Dendritic cell treated with granulocyte-macrophage colony-stimulating factor and Interleukin-4, amounts not matched to agents 40 ng/mL and 50 ng/mL, for 4 days (primary cell): ENCODE measurements at regions of chr20 and their contacts with region 1.

Region 1: GRCh38 chr20:57391074-57391554 is at the start of gene RBM38:
- H3K4me3 Mint-ChIP-seq: peak within 1 kb of the TSS; percentile 79
- H3K27ac Mint-ChIP-seq: peak within 1 kb of the TSS; percentile 97
- H3K4me1 Mint-ChIP-seq: peaks cover 59% of the 10 kb centered on the region
- H3K27me3 Mint-ChIP-seq: no peaks in the 10 kb centered on the region

Region 2: DNA sequence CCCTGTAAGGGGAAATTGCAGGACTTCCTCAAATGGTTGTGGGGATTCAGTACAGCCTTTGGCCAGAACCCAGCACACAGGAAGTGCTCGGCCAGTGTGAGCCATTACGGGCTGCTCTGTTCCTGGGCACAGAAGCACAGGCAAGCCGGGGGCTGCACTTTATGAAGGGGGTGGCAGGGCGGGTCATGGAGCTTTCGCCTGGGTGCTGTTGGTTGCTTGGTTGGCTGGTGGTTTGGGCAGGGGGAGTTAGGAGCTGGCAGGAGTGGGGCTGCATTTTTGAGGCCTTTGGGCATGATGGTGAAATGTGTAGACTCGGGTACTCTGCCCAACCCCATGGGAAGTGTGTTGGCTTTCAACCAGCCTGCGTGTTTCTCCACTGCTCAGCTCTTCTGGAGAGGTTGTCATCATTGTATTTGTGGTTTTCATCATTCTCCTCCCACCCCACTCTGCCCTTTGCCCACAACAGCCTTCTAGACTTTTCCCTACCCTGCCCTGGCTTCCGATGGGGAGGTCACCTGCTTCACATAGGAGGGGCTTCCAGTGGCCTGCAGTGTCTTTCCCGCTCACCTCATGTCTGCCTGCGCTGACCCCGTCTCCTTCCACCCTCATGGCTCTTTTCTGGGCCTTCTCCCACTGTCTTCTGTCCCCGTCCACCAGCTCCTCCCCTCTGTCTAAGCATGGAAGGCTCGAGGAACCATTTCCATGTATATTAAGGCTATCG is 16.0 kb before region 1 on chr20:
- intact Hi-C with region 1: no loop called
- H3K4me3 Mint-ChIP-seq: peak overlapping the region; percentile 67
- H3K27ac Mint-ChIP-seq: peak overlapping the region; percentile 85
- H3K4me1 Mint-ChIP-seq: peaks cover 25% of the 10 kb centered on the region
- H3K27me3 Mint-ChIP-seq: no peaks in the 10 kb centered on the region

Region 3: GRCh38 chr20:57432874-57433491 is 41.9 kb after region 1 on chr20:
- intact Hi-C with region 1: loop called (anchors 5 kb)
- H3K4me3 Mint-ChIP-seq: no peak overlapping the region
- H3K27ac Mint-ChIP-seq: peak overlapping the region; percentile 69
- H3K4me1 Mint-ChIP-seq: peaks cover 72% of the 10 kb centered on the region
- H3K27me3 Mint-ChIP-seq: peaks cover 26% of the 10 kb centered on the region

Region 4: DNA sequence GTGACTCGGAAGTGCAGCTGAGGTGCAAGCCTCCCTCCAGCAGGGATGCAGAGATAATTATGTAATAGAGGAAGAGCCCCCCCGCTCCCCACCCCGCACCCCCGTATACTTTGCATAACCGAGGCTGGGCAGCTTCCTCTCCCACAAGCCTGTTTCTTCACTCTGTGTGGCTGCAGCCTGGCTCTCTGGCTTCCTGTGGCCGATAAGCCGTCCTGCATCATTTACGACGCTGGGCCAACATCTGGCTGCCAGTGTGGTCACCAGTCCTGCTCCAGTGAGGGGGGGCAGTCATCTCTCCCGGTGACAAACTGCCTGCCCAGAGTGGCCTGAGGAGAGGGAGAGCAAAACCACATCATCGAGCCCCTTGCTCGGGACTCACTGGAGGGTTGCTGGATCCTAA is 59.3 kb after region 1 on chr20:
- intact Hi-C with region 1: no loop called
- H3K4me3 Mint-ChIP-seq: no peak overlapping the region
- H3K27ac Mint-ChIP-seq: peak overlapping the region; percentile 54
- H3K4me1 Mint-ChIP-seq: peaks cover 60% of the 10 kb centered on the region
- H3K27me3 Mint-ChIP-seq: peaks cover 20% of the 10 kb centered on the region

Region 5: DNA sequence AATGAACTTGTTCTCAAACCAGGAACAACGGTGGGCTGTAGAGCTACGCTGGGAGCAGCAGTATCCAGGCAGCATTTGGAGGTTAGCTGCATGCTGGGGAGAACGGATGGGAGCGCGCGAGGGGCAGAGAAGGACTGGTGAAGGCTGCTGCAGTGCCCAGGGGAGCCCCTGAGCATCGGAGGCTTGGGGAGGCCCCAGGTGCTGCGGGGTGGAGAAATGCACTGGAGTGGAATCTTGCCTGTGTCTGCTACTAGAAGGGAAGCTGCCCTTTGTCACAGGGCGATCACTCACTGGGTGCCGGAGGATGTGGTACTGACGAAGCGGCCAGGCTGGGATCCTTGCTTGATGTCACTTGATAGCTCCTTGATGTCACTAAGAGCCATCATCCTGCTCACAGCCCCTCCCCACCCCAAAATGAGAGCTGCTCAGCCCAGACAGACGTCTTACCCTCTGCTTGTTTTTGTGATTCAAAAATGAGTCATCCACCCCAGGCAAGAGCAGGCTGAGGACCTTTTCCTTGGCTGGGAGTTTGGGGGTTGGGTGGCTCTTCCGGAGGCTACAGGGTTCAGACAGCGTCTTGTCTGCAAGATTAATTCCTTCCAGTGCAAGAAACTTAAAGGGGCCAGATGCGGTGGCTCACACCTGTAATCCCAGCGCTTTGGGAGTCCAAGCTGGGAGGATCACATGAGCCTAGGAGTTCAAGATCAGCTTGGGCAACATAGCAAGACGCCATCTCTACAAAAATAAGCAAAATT is 381.3 kb after region 1 on chr20:
- intact Hi-C with region 1: no loop called
- H3K4me3 Mint-ChIP-seq: no peak overlapping the region
- H3K27ac Mint-ChIP-seq: no peak overlapping the region
- H3K4me1 Mint-ChIP-seq: no peaks in the 10 kb centered on the region
- H3K27me3 Mint-ChIP-seq: peaks cover 4% of the 10 kb centered on the region